ENCODE measurements at regions of chr3 and their contacts with region 1.

Region 1: DNA sequence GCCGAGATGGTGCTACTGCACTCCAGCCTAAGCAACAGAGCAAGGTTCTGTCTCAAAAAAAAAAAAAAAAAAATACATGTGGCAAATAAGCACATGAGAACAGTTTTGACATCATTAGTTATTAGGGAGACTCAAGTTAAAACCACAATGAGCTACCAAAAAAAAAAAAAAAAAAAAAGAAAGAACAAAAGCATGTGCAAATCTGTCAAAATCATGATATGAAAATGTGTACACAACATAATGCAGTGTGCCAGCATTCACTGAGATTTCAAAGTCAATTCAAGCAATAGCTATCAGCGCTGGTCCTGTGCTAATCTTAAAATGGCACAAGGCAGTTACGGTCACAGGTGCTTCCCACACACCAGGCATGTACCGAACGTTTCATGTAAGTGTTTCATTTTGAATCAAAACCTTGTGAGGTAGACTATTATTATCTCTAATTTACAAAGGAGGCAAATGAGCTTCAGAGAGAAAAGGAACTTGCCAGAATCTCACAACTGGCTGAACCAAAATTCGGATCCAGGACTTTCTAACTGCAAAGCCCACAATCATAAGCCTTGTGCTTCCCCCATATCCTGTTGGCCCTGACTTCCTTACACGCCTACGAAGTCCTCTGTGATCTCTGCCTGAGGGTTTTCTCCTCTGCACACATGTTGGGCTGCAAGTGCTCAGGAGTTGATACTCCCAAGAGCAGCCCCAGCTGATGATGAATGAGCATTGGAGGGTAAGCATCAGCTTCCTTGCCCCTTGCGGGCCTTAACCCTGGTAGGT is 200.1 kb upstream of the PROK2 start:
- DNase-seq: peak in 1 of 3 donors; percentile 39
- H3K4me3 ChIP-seq: no peak overlapping the region
- H3K4me3 Mint-ChIP-seq: peak overlapping the region in 1 of 2 donors; percentile 55
- H3K27ac ChIP-seq: no peak overlapping the region
- H3K27ac Mint-ChIP-seq: peak overlapping the region in 4 of 7 donors; percentile 34 to 78 (median 71)
- H3K4me1 ChIP-seq: peaks cover 20 to 23% of the 10 kb centered on the region in 2 donors
- H3K4me1 Mint-ChIP-seq: peaks cover 55% of the 10 kb centered on the region
- H3K27me3 ChIP-seq: peaks cover 0 to 3% of the 10 kb centered on the region in 2 donors
- H3K27me3 Mint-ChIP-seq: peaks cover 7 to 16% (median 15%) of the 10 kb centered on the region in 3 donors
- CTCF ChIP-seq: no peak

Region 2: GRCh38 chr3:72031581-72031980 is 46.6 kb after region 1 on chr3:
- intact Hi-C with region 1: loop called in 1 of 2 experiments (anchors 5 kb)
- DNase-seq: peak; percentile 82 to 95 (median 92)
- H3K4me3 ChIP-seq: peak overlapping the region in 1 of 3 experiments; percentile 6
- H3K4me3 Mint-ChIP-seq: peak overlapping the region; percentile 28 to 59
- H3K27ac ChIP-seq: peak overlapping the region in 1 of 2 donors; percentile 50
- H3K27ac Mint-ChIP-seq: peak overlapping the region; percentile 79 to 93 (median 89)
- H3K4me1 ChIP-seq: peaks cover 48 to 53% of the 10 kb centered on the region in 2 donors
- H3K4me1 Mint-ChIP-seq: peaks cover 51% of the 10 kb centered on the region
- H3K27me3 ChIP-seq: no peaks in the 10 kb centered on the region
- H3K27me3 Mint-ChIP-seq: peaks cover 0 to 3% (median 3%) of the 10 kb centered on the region in 3 donors
- CTCF ChIP-seq: peak; percentile 35

Measured in CD14-positive monocyte (primary cell).